Breast epithelium (tissue), 4 donors: ENCODE measurements at regions of chr14 and their contacts with region 1.

Region 1: DNA sequence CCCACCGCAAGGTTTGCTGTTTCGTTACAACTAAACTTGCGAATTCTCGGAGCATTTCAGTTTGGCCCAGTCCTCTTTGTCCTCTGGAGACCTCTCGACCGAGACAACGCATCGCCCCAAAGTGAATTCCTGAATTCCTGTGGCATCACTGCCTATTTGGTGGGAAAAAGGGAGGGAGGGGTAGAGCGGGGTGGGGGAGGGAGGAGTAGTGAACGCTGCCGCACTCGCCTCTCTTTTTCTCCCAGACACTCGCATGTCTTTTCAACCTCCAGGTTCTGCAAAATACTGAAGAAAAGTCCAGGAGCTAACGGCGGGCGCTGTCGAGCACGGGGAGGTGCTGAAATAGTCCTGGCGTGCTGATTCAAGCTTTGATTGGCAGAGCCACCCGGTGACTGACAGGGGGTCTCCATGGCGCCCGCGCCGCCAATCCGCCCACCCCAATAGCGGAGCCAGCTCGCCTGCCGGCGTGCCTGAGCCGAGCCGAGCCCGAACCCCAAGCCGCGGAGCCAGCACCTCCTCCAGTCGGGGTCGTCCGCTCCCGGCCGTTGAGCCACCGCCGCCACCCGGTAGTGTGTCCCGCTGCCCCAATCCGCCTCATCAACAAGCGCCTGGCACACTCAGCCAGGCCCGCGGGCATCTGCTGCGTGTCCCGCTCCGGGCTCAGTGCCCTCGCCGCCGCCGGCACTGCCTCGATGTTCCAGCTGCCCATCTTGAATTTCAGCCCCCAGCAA is at the start of gene SIX6:
- DNase-seq: no peak
- H3K4me3 ChIP-seq: peak within 1 kb of the TSS in 1 of 3 donors; percentile 44
- H3K27ac ChIP-seq: no peak within 1 kb of the TSS
- H3K4me1 ChIP-seq: no peaks in the 10 kb centered on the region
- H3K27me3 ChIP-seq: peaks cover 7 to 98% of the 10 kb centered on the region in 2 donors
- CTCF ChIP-seq: no peak
- POLR2A ChIP-seq: no peak
- total RNA-seq, gene SIX6: not detected

Region 2: DNA sequence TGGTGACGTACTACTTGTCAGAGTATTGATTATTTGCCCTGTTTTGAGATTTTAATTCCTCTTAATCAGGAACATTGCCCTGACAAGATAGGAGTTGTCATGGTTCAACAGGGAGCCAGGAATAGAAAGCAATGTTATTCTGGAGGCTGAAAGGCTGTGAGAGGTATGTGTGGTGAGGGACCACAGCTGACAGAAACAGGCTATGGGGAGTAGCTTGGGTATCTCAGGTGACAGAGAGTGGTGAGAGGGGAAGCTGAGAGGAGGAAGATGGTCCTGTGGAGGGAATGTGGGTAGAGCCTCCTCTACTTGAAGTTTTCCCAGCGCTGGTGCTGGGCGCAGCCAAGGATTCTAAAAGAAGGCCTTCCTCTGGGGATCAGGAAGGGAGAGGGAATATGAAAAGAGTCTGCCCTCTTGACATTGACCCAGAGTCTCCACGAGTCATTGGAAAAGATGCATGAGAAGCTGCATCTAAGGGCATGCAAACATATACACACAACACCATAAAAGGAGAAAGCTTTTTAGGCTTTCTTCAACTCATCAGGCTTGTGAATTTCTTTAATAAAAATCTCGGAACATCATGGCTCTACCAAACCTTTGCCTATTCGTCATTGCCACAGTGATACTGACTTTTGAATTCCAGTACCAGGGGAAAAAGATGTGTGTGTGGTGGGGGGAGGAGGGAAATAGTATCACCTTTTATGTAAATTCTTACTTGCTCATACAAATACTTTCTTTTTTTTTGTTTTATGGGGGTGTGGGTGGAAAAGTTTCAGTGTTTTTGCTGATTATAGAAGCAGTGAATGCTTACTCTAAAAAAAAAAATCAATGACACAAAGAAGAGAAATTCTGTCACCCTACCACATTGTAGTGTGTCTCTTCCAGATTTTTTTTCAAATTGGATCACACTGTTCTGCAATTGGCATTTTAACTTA is 303.8 kb before region 1 on chr14:
- intact Hi-C with region 1: loop called (anchors 5 kb)
- DNase-seq: no peak
- H3K4me3 ChIP-seq: no peak overlapping the region
- H3K27ac ChIP-seq: no peak overlapping the region
- H3K4me1 ChIP-seq: peaks cover 0 to 6% of the 10 kb centered on the region in 2 donors
- H3K27me3 ChIP-seq: no peaks in the 10 kb centered on the region
- CTCF ChIP-seq: no peak
- POLR2A ChIP-seq: no peak

Region 3: GRCh38 chr14:60561845-60562746 is 53.2 kb after region 1 on chr14:
- intact Hi-C with region 1: no loop called
- DNase-seq: no peak
- H3K4me3 ChIP-seq: no peak overlapping the region
- H3K27ac ChIP-seq: no peak overlapping the region
- H3K4me1 ChIP-seq: no peaks in the 10 kb centered on the region
- H3K27me3 ChIP-seq: no peaks in the 10 kb centered on the region
- CTCF ChIP-seq: peak in 2 of 3 donors; percentile 31 to 62
- POLR2A ChIP-seq: no peak

Region 4: GRCh38 chr14:61019537-61019936 is 510.7 kb after region 1 on chr14:
- intact Hi-C with region 1: no loop called
- DNase-seq: no peak
- H3K4me3 ChIP-seq: no peak overlapping the region
- H3K27ac ChIP-seq: no peak overlapping the region
- H3K4me1 ChIP-seq: no peaks in the 10 kb centered on the region
- H3K27me3 ChIP-seq: no peaks in the 10 kb centered on the region
- CTCF ChIP-seq: no peak
- POLR2A ChIP-seq: no peak

Region 5: DNA sequence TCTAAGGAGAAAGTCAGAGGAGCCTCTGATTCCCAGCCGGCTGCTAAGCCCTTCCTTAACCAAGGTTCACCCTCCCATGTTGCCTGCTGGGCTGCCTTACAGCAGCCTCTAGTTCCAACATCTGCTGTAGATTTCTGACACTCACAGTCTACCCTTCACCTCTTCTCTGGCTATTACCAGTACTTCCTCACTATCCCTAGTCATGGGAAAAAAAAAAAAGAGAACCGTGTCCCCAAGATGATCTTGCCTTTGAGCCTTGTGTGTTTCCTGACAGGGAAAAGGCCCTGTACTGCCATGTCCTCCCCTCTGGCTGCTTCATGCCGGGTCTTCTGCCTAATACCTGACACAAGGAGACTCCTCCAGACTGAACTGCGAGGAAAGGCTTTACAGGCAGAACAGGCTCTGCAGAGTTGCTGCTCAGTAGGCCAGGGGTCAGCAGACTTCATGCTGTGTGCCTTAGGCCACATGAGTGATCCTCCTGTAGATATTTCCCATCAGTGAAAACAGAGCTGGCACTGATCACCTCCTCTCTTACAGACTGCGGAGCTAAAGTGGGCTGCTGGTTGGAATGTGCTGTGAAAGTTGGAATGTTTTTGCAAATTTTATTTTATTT is 859.3 kb after region 1 on chr14:
- intact Hi-C with region 1: no loop called
- DNase-seq: no peak
- H3K4me3 ChIP-seq: no peak overlapping the region
- H3K27ac ChIP-seq: peak overlapping the region; percentile 38 to 41
- H3K4me1 ChIP-seq: peaks cover 0 to 7% of the 10 kb centered on the region in 2 donors
- H3K27me3 ChIP-seq: no peaks in the 10 kb centered on the region
- CTCF ChIP-seq: no peak
- POLR2A ChIP-seq: no peak